ENCODE measurements at regions of chr5 and their contacts with region 1.

Region 1: DNA sequence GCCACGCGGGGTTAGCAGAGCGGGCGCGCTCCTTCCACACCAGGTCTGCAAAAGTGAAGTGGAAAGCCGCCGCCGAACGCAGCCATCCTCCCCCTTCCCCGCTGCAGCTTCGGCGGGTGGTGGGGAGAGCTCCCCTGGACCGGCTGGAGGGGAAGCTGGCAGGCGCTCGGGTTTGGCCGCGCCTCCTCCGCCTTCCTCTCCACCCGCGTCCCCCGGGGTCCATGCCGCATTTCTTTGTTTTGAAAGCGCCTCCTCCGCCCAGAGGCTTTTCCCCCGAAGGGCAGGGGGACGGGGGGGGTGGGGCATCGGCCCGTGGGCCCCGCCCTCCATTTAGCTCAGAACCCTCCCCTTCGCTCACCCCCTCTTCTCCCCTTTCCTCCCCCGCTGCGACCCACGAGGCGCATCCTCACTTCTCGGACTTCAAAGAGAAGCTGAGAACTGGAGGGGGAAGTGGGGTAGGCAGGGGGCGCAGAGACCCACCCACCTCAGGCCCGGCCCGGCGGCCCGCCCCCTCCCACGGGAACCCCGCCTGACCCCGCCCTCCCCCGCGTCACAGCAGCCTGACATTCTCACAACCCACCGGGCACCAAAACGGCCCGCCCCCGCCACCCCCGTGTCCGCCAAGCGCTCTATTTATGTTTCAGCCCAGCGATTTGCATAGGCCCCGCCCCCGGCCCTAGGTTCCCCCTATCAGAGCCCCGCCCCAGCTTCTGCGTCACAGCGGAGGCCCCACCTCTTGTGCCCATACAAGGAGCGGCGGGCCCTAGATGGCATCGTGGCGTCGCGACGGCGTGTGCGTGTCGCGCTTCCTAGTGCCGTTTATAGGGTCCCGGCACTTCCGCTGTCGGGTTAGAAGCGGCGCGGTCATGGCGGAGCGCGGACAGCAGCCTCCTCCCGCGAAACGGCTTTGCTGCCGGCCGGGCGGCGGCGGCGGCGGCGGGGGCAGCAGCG is at the start of gene ZSWIM6:
- DNase-seq: peak; percentile 100
- H3K4me3 ChIP-seq: peak within 1 kb of the TSS; percentile 98 to 99
- H3K27ac ChIP-seq: peak within 1 kb of the TSS; percentile 94 to 96
- H3K4me1 ChIP-seq: peaks cover 0 to 28% (median 6%) of the 10 kb centered on the region in 4 donors
- H3K27me3 ChIP-seq: no peaks in the 10 kb centered on the region
- CTCF ChIP-seq: no peak

Region 2: GRCh38 chr5:60944904-60945812 is 386.5 kb before region 1 on chr5 and contains the starts of genes ERCC8 and NDUFAF2:
- intact Hi-C with region 1: loop called (anchors 10 kb)
- DNase-seq: peak; percentile 92 to 94
- H3K4me3 ChIP-seq: peak within 1 kb of the TSS; percentile 68 to 86
- H3K27ac ChIP-seq: peak within 1 kb of the TSS; percentile 78 to 89
- H3K4me1 ChIP-seq: peaks cover 0 to 20% (median 4%) of the 10 kb centered on the region in 4 donors
- H3K27me3 ChIP-seq: no peaks in the 10 kb centered on the region
- CTCF ChIP-seq: no peak

Region 3: GRCh38 chr5:61162010-61162831 is 169.5 kb before region 1 on chr5 and contains the start of gene SMIM15:
- intact Hi-C with region 1: loop called (anchors 5 kb)
- DNase-seq: peak; percentile 86 to 91
- H3K4me3 ChIP-seq: peak within 1 kb of the TSS; percentile 78
- H3K27ac ChIP-seq: peak within 1 kb of the TSS; percentile 91 to 92
- H3K4me1 ChIP-seq: peaks cover 0 to 35% (median 8%) of the 10 kb centered on the region in 4 donors
- H3K27me3 ChIP-seq: no peaks in the 10 kb centered on the region
- CTCF ChIP-seq: peak in 1 of 2 experiments; percentile 10

Region 4: GRCh38 chr5:61408476-61409168 is 76.9 kb after region 1 on chr5:
- intact Hi-C with region 1: loop called (anchors 5 kb)
- DNase-seq: peak; percentile 99 to 100
- H3K4me3 ChIP-seq: peak overlapping the region; percentile 28 to 33
- H3K27ac ChIP-seq: peak overlapping the region in 1 of 2 donors; percentile 40
- H3K4me1 ChIP-seq: peaks cover 0 to 29% (median 15%) of the 10 kb centered on the region in 4 donors
- H3K27me3 ChIP-seq: no peaks in the 10 kb centered on the region
- CTCF ChIP-seq: no peak

Region 5: DNA sequence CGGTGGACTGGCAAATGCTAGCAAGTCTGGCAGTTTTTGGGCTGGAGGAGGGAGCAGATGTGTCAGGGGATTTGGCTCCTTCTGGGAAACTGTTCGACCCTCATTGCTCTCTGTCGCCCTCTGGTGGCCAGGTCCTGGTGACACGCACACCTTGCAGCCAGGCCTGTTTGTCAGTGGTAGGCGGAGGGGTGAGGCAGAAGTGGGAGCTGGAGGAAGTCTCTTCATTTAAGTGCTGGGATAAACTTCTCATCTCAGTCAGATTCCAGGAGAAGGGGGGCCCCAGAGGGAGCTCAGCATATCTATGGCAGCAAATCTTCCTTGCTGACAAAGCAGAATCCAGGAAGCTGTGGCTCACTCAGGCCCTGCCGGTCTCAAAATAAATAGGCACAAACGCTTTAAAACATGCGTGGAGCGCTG is 326.9 kb after region 1 on chr5:
- intact Hi-C with region 1: loop called (anchors 10 kb)
- DNase-seq: peak; percentile 73 to 86
- H3K4me3 ChIP-seq: no peak overlapping the region
- H3K27ac ChIP-seq: no peak overlapping the region
- H3K4me1 ChIP-seq: no peaks in the 10 kb centered on the region
- H3K27me3 ChIP-seq: no peaks in the 10 kb centered on the region
- CTCF ChIP-seq: peak; percentile 85 to 86

Measured in tibial artery (tissue), 4 donors.